Activated CD4-positive, alpha-beta memory T cell treated with anti-CD3 and anti-CD28 coated beads for 36 hours (primary cell): ENCODE measurements at regions of chr6 and their contacts with region 1.

Region 1: GRCh38 chr6:35240840-35241801 is 18.4 kb upstream of the ZNF76 start:
- DNase-seq: peak; percentile 84
- H3K4me3 Mint-ChIP-seq: no peak overlapping the region
- H3K27ac Mint-ChIP-seq: no peak overlapping the region
- H3K4me1 Mint-ChIP-seq: no peaks in the 10 kb centered on the region
- H3K27me3 Mint-ChIP-seq: no peaks in the 10 kb centered on the region

Region 2: DNA sequence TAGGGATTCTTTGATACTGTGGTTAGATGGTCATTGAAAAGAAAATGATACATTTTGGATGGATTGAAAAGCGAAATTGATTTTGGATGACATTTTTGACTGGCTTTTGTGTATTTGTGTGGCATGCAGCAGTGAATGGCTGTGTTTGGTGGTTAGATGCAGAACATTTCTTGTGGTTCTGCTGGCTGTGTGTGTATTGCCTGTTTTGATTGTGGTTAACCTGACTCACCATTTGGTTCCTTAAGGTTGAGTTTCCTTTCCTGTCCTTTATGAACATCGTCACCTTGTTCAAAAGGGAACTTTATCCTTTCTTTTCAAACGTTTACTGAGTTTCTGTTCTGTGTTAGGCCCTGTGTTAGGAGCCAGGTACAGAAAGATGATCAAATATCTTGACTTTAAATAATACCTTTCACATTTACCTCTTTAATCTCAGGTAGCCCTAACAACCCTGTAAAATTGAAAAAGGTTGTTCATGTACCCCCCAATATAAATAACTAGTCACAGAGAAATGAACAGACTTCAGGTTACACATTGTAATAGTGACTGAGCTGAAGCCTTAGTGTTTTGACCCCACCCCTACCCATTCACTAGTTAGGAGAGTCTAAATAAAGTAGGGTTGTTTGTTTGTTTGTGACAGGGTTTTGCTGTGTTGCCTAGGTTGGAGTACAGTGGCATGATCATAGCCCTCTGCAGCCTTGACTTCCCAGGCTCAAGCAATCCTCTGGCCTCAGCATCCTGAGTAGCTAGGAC is 328.2 kb before region 1 on chr6:
- CTCF ChIA-PET with region 1: no interaction called
- POLR2A ChIA-PET with region 1: no interaction called
- intact Hi-C with region 1: no loop called
- DNase-seq: peak; percentile 64
- H3K4me3 Mint-ChIP-seq: no peak overlapping the region
- H3K27ac Mint-ChIP-seq: peak overlapping the region; percentile 31
- H3K4me1 Mint-ChIP-seq: peaks cover 29% of the 10 kb centered on the region
- H3K27me3 Mint-ChIP-seq: peaks cover 2% of the 10 kb centered on the region

Region 3: DNA sequence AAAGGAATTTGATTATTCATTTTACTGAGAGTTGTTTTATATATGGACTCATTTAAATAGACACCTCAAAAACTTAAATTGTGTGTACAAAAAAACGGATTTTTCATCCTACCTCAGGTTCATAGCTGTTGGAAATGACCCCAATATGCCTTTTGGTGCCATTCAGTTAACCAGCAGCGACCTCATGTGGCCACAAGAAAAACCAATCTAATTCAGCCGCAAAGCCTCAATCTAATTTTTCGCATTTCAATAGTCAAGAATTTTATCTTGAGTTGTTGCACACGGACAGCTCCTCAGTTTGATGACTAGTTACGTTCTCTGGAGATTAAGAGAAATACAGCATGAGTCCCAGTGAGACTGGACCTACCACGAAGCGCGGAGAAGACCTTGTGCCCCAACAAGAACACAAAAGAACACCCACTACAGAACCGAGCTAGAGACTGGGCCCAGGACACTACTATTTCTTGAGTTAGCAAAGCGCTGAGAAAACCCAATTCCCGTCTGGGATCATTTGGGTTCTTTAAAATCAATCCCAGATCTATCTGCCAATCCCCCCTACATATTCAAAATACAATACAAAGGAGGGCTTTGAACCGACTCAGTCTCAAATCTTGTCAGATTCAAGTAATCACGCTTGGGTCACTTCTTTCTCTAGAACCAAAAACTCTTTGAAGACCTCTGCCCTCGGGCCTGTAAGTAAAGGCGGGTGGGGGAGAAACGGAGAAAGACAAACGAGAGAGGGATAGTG is 101.0 kb before region 1 on chr6:
- CTCF ChIA-PET with region 1: interaction called, 54 read pairs
- POLR2A ChIA-PET with region 1: no interaction called
- intact Hi-C with region 1: no loop called
- DNase-seq: peak; percentile 62
- H3K4me3 Mint-ChIP-seq: no peak overlapping the region
- H3K27ac Mint-ChIP-seq: no peak overlapping the region
- H3K4me1 Mint-ChIP-seq: peaks cover 15% of the 10 kb centered on the region
- H3K27me3 Mint-ChIP-seq: peaks cover 17% of the 10 kb centered on the region

Region 4: GRCh38 chr6:35152067-35152707 is 88.9 kb before region 1 on chr6:
- CTCF ChIA-PET with region 1: interaction called, 54 read pairs
- POLR2A ChIA-PET with region 1: no interaction called
- intact Hi-C with region 1: loop called (anchors 1 kb)
- DNase-seq: no peak
- H3K4me3 Mint-ChIP-seq: no peak overlapping the region
- H3K27ac Mint-ChIP-seq: no peak overlapping the region
- H3K4me1 Mint-ChIP-seq: peaks cover 26% of the 10 kb centered on the region
- H3K27me3 Mint-ChIP-seq: peaks cover 3% of the 10 kb centered on the region

Region 5: GRCh38 chr6:35209081-35209480 is 32.0 kb before region 1 on chr6:
- CTCF ChIA-PET with region 1: interaction called, 34 read pairs
- POLR2A ChIA-PET with region 1: no interaction called
- intact Hi-C with region 1: no loop called
- DNase-seq: no peak
- H3K4me3 Mint-ChIP-seq: no peak overlapping the region
- H3K27ac Mint-ChIP-seq: no peak overlapping the region
- H3K4me1 Mint-ChIP-seq: peaks cover 5% of the 10 kb centered on the region
- H3K27me3 Mint-ChIP-seq: peaks cover 55% of the 10 kb centered on the region

Region 6: DNA sequence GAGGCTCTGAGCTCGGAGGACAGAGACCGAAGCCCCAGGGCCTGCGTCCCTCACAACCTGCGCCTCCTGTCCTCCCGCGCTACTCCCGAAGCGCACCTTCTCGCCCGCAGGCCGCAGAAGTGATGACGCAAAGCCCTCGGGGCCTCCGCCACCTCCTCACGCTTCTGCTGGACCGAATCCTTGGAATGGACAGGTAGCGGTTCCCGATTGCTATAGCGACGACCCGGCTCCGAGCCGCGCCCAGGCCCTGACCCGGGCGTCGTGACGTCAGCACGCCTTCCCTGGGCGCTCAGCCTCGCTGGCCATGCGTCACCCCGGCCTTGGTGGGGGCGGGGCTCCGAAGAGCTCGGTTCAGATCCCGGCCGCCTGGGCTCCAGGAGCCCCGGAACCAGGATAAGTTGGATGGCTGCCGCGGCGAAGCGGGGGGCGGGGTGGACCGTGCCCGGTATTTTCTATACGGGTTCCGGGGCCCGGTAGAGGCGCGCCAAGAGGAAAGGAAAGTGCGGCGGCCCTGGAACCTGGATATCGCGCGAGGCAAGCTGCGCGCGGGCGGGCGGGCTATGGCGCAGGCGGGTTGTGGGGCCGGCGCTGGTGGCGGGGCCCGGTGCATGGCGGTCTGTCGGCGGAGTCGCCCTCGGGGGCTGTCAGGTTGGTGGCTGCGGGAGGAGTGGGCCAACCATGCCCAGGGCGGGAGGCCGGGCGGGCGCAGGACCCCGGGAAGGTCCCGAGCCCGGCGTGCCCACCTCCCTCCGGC is 18.2 kb after region 1 on chr6 and contains the start of gene ZNF76:
- CTCF ChIA-PET with region 1: interaction called, 55 read pairs
- POLR2A ChIA-PET with region 1: no interaction called
- intact Hi-C with region 1: no loop called
- DNase-seq: peak; percentile 92
- H3K4me3 Mint-ChIP-seq: peak within 1 kb of the TSS; percentile 97
- H3K27ac Mint-ChIP-seq: peak within 1 kb of the TSS; percentile 85
- H3K4me1 Mint-ChIP-seq: peaks cover 39% of the 10 kb centered on the region
- H3K27me3 Mint-ChIP-seq: no peaks in the 10 kb centered on the region
- total RNA-seq, gene ZNF76: 35.2 to 38.5 TPM

Region 7: GRCh38 chr6:35280903-35281302 is 39.8 kb after region 1 on chr6:
- CTCF ChIA-PET with region 1: no interaction called
- POLR2A ChIA-PET with region 1: no interaction called
- intact Hi-C with region 1: no loop called
- DNase-seq: no peak
- H3K4me3 Mint-ChIP-seq: no peak overlapping the region
- H3K27ac Mint-ChIP-seq: no peak overlapping the region
- H3K4me1 Mint-ChIP-seq: no peaks in the 10 kb centered on the region
- H3K27me3 Mint-ChIP-seq: no peaks in the 10 kb centered on the region

Region 8: GRCh38 chr6:35844290-35844689 is 603.2 kb after region 1 on chr6:
- CTCF ChIA-PET with region 1: no interaction called
- POLR2A ChIA-PET with region 1: no interaction called
- intact Hi-C with region 1: no loop called
- DNase-seq: no peak
- H3K4me3 Mint-ChIP-seq: no peak overlapping the region
- H3K27ac Mint-ChIP-seq: no peak overlapping the region
- H3K4me1 Mint-ChIP-seq: no peaks in the 10 kb centered on the region
- H3K27me3 Mint-ChIP-seq: no peaks in the 10 kb centered on the region